GM18951 (cell line): ENCODE measurements at regions of chr19 and their contacts with region 1.

Region 1: GRCh38 chr19:54179921-54180461 is 7.0 kb upstream of the TMC4 start:
- POLR2A ChIP-seq: no peak

Region 2: DNA sequence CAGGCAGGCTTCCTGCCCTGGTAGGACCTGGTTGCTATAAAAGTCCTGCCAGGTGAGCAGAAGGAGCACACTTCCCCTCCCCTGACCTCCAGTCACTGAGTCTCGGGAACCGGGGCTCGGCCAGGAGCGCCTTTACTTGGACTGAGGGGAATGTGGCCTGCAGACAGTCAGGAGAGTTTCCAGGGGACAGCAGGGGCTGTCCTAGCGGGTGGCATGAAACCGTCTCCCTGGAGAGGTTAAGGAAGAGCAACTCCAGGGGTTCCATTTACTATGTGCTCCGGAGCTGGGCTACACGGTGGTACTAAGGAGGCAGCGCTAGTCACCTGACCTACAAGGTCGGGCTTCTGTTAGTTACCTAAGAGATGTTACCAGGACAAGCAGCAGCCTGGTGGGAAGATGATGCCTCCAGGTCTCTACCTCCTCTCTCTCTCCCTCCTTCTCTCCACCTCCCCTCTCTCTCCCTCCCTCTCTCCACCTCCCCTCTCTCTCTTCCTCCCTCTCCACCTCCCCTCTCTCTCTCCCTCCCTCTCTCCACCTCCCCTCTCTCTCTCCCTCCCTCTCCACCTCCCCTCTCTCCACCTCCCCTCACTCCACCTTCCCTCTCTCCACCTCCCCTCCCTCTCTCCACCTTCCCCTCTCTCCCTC is 46.6 kb before region 1 on chr19:
- in situ Hi-C with region 1: no loop called
- POLR2A ChIP-seq: no peak

Region 3: DNA sequence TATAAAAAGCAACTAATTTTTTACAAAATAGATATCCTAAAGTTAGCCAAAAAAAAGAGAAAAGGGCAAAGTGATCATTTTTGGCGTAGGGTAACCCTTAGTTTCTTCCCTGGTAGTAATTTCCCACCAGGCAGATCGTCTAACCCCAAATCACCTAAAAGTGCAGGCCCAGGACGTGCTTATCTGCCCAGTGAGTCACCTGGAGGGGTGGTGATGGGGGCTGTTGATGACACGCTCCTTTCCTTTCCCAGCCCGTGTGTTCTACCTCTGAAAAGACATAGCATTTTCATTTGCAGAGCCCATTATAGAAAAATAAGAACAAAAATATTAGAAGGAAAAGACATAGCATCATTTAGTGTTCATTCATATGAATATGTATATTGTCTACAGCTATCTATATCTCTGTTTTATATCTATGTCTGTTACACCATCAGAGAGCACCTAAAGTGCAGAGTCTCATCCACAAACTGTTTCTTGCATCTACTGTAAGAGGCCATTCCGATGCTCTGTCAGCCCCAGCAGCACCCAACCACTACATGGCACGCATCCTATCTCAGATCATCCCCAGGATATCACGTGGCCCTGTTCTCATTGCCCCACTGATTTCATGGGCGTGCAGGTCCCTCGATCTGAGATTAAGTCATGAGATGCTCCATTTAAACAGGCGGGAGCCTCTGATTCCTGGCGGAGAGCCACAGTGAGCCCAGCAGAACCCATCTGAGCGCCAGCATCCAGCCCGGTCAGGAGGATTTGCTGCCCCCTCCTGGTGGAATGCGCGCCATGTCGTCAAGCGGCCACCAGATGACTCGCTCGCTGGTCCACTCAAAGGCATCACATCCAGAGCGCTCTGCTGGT is 51.3 kb after region 1 on chr19:
- in situ Hi-C with region 1: loop called (anchors 10 kb)
- POLR2A ChIP-seq: no peak